Mammary epithelial cell (primary cell): ENCODE measurements at regions of chr19 and their contacts with region 1.

Region 1: DNA sequence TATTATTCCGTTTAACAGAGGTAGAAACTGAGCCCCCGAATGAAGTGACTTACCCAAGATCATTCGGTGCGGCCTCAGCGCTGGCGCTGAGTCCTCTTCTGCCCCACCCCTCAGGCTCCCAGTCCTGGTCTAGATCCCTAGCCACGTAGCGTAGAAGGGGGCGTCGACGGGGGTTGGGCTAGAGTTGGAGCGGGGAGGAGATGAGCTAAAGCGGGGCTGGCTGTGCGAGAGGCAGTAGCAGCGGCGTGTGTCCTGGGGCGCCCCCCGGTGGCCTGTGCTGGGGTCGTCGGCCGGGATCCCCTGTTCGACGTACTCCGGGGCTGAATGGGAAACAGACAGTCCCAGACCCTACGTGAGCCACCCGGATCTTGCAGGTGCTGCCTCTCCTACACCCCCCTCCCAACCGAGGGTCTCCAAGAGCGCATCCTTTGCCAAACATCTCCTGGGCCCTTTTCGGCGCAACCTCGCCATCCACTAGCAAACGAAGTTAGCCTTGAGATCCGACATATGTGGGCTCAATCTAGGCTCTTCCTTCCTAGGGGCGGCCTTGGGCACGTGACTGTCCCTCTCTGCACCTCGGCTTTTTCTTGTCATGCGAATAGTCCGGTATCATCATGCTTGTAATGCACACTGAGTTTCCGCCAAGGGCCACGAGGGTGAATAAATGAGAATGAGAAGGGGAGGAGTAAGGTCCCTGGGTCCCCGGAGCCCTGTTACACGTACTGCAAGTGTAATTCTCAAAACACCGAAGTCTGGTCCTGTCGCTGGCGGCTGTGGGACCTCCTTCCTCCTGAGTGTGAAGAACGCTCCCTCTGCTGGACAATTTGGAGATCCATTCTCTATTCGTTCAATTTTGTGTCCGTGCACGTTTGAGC is 47.7 kb downstream of the CYP4F22 start:
- DNase-seq: peak; percentile 89
- H3K4me3 ChIP-seq: peak overlapping the region in 2 of 3 experiments; percentile 7 to 13
- H3K27ac ChIP-seq: no peak overlapping the region
- H3K4me1 ChIP-seq: peaks cover 15% of the 10 kb centered on the region
- H3K27me3 ChIP-seq: no peaks in the 10 kb centered on the region
- CTCF ChIP-seq: peak; percentile 64 to 88

Region 2: DNA sequence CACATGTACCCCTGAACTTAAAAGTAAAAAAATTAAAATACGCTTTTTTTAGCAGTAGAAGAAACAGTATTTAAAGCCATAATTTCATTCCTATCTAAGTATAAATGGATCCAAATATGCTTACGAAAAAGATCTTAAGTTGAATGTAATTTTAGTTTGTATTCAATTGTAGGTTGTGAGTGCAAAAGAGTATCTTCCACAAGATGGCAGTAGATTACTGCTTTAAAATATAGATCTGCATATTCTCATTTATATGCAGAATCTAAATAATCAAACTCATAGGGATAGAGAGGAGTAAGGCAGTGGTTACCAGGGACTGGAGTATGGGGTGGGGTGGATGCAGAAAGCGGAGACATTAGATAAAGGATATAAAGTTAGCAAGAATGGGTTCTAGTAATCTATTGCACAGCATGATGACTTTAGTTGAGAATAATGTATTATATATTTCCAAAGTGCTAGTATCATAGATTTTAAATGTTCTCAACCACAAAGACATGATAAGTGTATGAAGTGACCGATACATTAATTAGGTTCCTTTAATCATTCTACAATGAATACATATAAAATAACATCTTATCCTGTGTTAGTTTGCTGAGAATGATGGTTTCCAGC is 684.3 kb before region 1 on chr19:
- CTCF ChIA-PET with region 1: no interaction called
- dilution Hi-C with region 1: no loop called
- in situ Hi-C with region 1: loop called in 1 of 2 experiments (anchors 25 kb)
- intact Hi-C with region 1: loop called (anchors 2 kb)
- DNase-seq: peak; percentile 21
- H3K4me3 ChIP-seq: no peak overlapping the region
- H3K27ac ChIP-seq: no peak overlapping the region
- H3K4me1 ChIP-seq: no peaks in the 10 kb centered on the region
- H3K27me3 ChIP-seq: no peaks in the 10 kb centered on the region
- CTCF ChIP-seq: peak; percentile 56 to 69

Region 3: GRCh38 chr19:15154002-15154612 is 401.9 kb before region 1 on chr19:
- CTCF ChIA-PET with region 1: interaction called, 13 read pairs
- dilution Hi-C with region 1: no loop called
- in situ Hi-C with region 1: no loop called
- intact Hi-C with region 1: loop called (anchors 5 kb)
- DNase-seq: peak; percentile 41
- H3K4me3 ChIP-seq: no peak overlapping the region
- H3K27ac ChIP-seq: no peak overlapping the region
- H3K4me1 ChIP-seq: no peaks in the 10 kb centered on the region
- H3K27me3 ChIP-seq: no peaks in the 10 kb centered on the region
- CTCF ChIP-seq: peak; percentile 70 to 81

Region 4: DNA sequence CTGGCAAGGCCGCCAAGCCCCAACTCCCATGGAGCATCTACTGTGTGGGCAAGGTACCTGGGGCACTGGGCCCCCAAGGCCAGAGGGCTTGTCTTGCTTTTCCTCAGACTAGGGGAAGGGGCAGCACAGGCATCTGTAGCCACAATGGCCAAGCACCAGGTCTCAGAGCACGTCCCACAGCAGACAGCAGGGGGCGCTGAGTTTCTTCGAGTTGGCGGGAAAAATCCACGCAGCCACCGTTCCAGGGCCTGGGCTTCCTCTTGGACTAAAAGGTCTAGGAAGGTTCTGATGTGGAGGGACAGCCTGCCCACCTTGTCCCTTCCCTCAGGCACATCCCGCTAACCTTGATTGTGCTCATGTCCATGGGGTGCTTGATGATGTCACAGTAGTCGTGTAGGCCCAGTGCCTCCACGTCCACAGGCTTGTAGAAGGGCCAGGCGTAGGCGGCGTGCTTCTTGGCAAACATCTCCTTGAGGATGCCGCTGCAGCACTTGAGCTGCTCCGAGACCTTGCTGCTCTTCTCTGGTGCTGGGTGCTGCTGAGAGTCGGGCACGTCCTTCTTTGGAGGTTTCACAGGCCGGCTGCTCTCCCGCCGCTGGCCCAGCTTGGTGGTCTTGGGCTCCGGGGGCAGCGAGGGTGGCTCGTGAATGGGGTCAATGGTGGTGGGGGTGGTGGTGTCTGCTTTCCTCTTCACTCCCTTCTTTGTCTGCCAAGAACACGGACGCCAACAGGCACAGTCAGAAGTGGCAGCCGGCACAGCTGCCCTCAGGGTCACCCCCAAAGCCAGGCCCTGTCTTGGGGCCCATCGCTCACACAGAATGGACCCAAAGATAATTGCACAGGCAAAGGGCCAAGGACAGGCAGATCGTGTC is 291.7 kb before region 1 on chr19:
- CTCF ChIA-PET with region 1: no interaction called
- dilution Hi-C with region 1: no loop called
- in situ Hi-C with region 1: loop called in 1 of 2 experiments (anchors 10 kb)
- intact Hi-C with region 1: loop called (anchors 1 kb)
- DNase-seq: peak; percentile 35
- H3K4me3 ChIP-seq: no peak overlapping the region
- H3K27ac ChIP-seq: no peak overlapping the region
- H3K4me1 ChIP-seq: peaks cover 7% of the 10 kb centered on the region
- H3K27me3 ChIP-seq: no peaks in the 10 kb centered on the region
- CTCF ChIP-seq: peak; percentile 66 to 81

Region 5: GRCh38 chr19:15418588-15419412 is 137.2 kb before region 1 on chr19 and contains the start of gene AKAP8L:
- CTCF ChIA-PET with region 1: interaction called, 19 read pairs
- dilution Hi-C with region 1: no loop called
- in situ Hi-C with region 1: loop called in 1 of 2 experiments (anchors 10 kb)
- intact Hi-C with region 1: loop called (anchors 1 kb)
- DNase-seq: peak; percentile 99
- H3K4me3 ChIP-seq: peak within 1 kb of the TSS; percentile 80 to 99 (median 92)
- H3K27ac ChIP-seq: peak within 1 kb of the TSS; percentile 60
- H3K4me1 ChIP-seq: peaks cover 23% of the 10 kb centered on the region
- H3K27me3 ChIP-seq: no peaks in the 10 kb centered on the region
- CTCF ChIP-seq: peak; percentile 51 to 77
- total RNA-seq, gene AKAP8L: 55.0 to 75.9 TPM

Region 6: DNA sequence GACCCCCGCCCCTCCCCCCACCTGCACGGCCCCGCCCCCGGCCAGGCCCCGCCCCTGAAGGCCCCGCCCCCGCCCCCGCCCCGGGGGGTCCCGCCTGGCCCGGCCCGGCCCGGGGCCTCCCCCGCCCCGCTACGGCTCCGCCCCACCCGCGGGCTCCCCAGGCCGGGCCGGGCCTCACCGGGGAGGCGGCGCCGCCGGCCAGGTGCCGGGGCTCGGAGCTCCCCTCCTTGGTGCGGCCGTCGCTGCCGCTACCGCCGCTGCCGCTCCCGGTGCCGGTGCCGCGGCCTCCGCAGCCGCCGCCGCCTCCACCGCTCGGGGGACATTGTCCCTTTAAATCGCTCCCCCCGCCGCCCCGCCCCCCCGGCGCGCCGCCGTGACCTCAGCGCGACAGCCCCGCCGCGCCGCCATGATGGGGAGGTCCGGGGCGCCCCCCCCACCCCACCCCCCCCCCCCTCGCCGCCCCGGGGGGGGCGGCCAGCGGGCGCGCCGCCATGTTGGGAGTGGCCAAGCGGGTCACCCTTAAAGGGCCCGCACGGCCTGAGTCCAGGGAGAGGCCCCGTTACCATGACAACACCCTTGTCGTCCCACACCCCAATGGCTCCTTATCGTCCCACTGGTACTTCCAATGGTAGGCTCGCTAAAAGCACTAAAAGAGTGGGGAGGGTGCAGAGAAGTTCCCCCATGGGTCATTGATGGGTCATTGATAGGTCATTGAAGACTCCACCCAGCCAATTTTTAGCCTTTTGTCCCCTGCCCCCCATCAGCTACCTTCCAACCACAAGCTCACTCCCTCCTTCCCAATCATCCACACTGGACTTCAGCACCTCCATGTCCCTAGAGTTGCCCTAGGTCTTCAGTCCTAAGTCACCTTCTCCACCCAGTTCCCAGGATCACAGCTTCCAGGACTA is 106.1 kb before region 1 on chr19 and contains the start of gene WIZ:
- CTCF ChIA-PET with region 1: no interaction called
- dilution Hi-C with region 1: no loop called
- in situ Hi-C with region 1: loop called in 1 of 2 experiments (anchors 10 kb)
- intact Hi-C with region 1: no loop called
- DNase-seq: peak; percentile 65
- H3K4me3 ChIP-seq: peak within 1 kb of the TSS; percentile 50 to 58 (median 53)
- H3K27ac ChIP-seq: no peak within 1 kb of the TSS
- H3K4me1 ChIP-seq: peaks cover 11% of the 10 kb centered on the region
- H3K27me3 ChIP-seq: no peaks in the 10 kb centered on the region
- CTCF ChIP-seq: no peak
- total RNA-seq, gene WIZ: 8.8 to 39.6 TPM

Region 7: GRCh38 chr19:15479391-15480345 is 76.3 kb before region 1 on chr19 and contains the start of gene PGLYRP2:
- CTCF ChIA-PET with region 1: no interaction called
- dilution Hi-C with region 1: no loop called
- in situ Hi-C with region 1: no loop called
- intact Hi-C with region 1: loop called (anchors 1 kb)
- DNase-seq: no peak
- H3K4me3 ChIP-seq: no peak within 1 kb of the TSS
- H3K27ac ChIP-seq: no peak within 1 kb of the TSS
- H3K4me1 ChIP-seq: peaks cover 4% of the 10 kb centered on the region
- H3K27me3 ChIP-seq: no peaks in the 10 kb centered on the region
- CTCF ChIP-seq: peak; percentile 16 to 74
- total RNA-seq, gene PGLYRP2: not detected